ENCODE measurements at regions of chr19 and their contacts with region 1.

Region 1: DNA sequence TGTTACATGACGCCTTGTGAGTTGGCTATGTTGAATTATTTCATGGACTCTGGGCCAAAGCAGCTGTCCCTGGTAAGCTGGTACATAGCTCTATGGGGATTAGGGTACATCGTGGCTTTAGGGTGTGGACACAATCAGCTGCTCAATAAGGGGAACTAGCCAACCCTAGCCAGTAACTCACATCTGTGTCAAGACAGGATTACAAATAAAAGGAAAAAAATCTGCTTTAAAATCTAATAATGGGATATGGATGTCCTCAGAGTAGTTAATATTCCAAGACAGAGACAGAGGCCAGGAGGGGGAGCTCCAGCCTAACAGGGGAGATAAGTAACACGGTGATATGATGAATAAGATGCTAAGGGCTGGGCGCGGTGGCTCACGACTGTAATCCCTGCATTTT is 21.1 kb upstream of the ZNF766 start:
- DNase-seq: peak; percentile 33 to 53 (median 43)
- H3K4me3 ChIP-seq: no peak overlapping the region
- H3K4me3 Mint-ChIP-seq: no peak overlapping the region
- H3K27ac ChIP-seq: no peak overlapping the region
- H3K27ac Mint-ChIP-seq: no peak overlapping the region
- H3K4me1 ChIP-seq: no peaks in the 10 kb centered on the region
- H3K4me1 Mint-ChIP-seq: no peaks in the 10 kb centered on the region
- H3K27me3 ChIP-seq: no peaks in the 10 kb centered on the region
- H3K27me3 Mint-ChIP-seq: peaks cover 0 to 3% (median 2%) of the 10 kb centered on the region in 3 donors
- CTCF ChIP-seq: peak; percentile 59

Region 2: DNA sequence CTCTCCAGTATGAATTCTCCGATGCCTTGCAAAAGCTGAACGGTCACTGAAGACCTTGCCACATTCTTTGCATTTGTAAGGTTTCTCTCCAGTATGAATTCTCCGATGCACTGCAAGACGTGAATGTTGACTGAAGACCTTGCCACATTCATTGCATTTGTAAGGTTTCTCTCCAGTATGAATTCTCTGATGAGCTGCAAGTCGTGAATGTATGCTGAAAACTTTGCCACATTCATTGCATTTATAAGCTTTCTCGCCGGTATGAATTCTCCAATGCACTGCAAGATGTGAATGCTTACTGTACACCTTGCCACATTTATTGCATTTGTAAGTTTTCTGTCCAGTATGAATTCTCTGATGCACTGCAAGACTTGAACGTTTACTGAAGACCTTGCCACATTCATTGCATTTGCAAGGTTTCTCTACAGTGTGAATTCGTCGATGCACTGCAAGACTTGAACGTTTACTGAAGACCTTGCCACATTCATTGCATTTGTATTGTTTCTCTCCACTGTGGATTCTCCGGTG is 132.7 kb before region 1 on chr19:
- intact Hi-C with region 1: no loop called
- DNase-seq: no peak
- H3K4me3 ChIP-seq: peak overlapping the region in 1 of 3 experiments; percentile 41
- H3K4me3 Mint-ChIP-seq: no peak overlapping the region
- H3K27ac ChIP-seq: no peak overlapping the region
- H3K27ac Mint-ChIP-seq: no peak overlapping the region
- H3K4me1 ChIP-seq: no peaks in the 10 kb centered on the region
- H3K4me1 Mint-ChIP-seq: no peaks in the 10 kb centered on the region
- H3K27me3 ChIP-seq: no peaks in the 10 kb centered on the region
- H3K27me3 Mint-ChIP-seq: no peaks in the 10 kb centered on the region
- CTCF ChIP-seq: no peak

Region 3: GRCh38 chr19:52748336-52748950 is 500.2 kb after region 1 on chr19:
- intact Hi-C with region 1: loop called in 1 of 2 experiments (anchors 5 kb)
- DNase-seq: peak; percentile 21 to 32 (median 21)
- H3K4me3 ChIP-seq: no peak overlapping the region
- H3K4me3 Mint-ChIP-seq: no peak overlapping the region
- H3K27ac ChIP-seq: no peak overlapping the region
- H3K27ac Mint-ChIP-seq: no peak overlapping the region
- H3K4me1 ChIP-seq: no peaks in the 10 kb centered on the region
- H3K4me1 Mint-ChIP-seq: no peaks in the 10 kb centered on the region
- H3K27me3 ChIP-seq: no peaks in the 10 kb centered on the region
- H3K27me3 Mint-ChIP-seq: peaks cover 0 to 1% (median 0%) of the 10 kb centered on the region in 3 donors
- CTCF ChIP-seq: peak; percentile 60